Aorta (tissue), 5 donors: ENCODE measurements at regions of chr11 and their contacts with region 1.

Region 1: DNA sequence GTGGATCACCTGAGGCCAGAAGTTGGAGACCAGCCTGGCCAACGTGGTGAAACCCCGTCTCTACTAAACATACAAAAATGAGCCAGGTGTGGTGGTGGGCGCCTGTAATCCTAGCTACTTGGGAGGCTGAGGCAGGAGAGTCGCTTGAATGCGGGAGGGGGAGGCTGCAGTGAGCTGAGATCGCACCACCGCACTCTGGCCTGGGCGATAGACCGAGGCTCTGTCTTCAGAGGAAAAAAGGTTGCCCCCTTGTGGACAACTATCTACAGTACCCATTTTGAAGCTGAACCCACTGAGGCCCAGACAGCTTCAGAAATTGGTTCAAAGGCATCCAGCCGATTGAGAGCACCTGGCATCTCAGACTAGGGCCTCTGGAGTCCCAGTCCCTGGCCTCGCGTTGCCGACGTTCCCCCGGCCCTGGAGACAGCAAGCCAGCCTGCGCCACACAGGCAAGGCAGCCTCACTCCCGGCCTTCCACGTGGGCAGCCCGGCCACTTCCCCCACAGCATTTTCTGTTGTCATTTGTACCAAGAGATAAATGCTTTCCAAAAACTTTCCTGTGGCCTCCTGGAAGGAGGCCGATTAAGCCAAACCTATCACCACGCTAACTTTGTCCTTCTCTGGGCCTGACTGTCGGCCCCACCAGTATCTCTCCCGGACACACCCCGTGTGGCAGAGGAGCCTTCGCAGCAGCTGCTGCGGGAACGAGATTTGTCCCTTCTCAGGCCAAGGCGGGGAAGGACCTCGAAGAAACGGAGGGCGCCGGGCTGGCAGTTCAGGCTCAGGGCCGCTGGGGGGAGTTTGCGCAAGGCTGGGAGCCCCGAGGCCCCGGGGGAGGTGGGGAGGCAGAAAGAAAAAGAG is 82.8 kb downstream of the FLI1 start:
- DNase-seq: peak; percentile 58 to 83
- ATAC-seq: peak; percentile 55
- H3K4me3 ChIP-seq: no peak overlapping the region
- H3K27ac ChIP-seq: no peak overlapping the region
- H3K4me1 ChIP-seq: no peaks in the 10 kb centered on the region
- H3K27me3 ChIP-seq: no peaks in the 10 kb centered on the region

Region 2: DNA sequence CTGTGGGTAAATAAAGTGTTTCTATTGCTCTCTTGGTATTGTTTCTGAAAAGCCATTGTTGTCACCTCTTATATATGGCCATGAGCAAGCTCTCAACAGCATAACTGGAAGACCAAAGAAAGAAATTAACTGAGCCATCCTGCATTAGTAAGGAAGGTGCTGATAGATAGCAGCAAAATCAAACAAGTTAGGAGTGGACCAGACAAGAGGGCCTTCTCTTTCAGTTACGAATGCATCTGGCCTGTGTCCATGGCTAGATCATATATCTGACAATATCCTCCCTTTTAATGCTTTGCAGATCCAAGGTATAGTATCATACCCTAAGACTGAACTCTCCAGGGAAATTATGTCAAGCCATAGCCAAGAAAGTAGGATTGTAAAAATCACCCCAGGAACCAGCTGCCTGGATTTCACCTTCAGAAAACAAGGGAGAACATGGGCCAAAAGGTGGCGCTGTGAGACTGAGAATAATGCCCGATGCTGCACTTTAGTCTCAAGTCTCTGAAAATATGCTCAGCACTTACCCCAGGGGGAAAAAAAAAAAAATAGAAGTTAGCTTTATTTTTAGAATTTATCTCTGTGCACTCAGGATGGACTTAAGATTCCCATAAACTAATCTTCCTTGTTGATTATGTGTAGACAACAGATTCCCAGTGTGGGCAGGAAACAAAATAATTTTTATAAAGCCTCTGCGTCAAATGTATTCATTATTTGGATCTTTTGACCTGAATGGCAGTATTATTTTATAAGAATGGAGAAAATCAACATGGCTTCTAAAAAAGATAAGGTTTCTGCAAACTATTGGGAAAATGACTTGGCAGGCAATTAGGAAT is 604.4 kb before region 1 on chr11:
- intact Hi-C with region 1: loop called in 1 of 2 experiments (anchors 5 kb)
- DNase-seq: peak; percentile 84 to 91
- ATAC-seq: peak; percentile 83
- H3K4me3 ChIP-seq: no peak overlapping the region
- H3K27ac ChIP-seq: no peak overlapping the region
- H3K4me1 ChIP-seq: no peaks in the 10 kb centered on the region
- H3K27me3 ChIP-seq: peaks cover 0 to 2% of the 10 kb centered on the region in 2 donors

Region 3: DNA sequence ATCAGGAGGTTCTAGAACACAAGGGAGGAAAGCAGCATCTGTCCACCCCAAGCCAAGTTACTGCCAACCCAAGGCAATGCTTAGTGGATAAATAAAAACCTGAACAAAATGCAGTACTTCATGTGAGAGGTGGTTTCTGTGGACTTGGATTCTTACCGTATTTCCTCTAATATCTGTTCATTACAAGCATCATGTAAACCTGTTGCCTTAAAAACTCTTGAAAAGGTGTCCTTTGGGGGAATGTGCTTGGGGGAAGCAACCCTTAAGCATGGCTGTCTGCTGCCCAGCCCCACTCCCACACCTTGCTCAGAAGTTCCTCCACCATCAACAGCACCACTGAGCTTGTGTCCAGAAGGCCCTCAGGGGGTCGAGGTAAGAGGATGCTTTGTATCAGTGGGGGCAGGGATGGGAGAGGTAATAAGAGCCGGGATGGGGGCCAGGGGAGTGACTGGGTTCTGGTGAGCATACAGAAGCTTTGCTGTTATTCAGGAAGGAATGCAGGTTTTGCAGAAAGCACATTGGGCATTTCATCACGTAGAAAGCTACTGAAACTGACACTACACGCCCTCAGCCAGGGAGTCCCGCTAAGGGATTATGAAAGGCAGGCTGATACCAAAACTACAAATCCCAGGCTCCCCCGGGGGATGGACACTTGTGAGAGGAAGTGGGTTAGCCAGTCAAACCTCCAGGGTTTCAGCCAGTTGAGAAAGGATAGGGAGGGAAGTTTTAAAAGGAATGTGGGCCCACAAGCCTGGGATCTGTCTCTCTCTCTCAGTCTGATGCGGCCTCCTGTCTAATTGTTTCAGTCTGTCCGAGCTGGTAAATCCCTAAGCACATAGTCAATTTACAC is 38.4 kb after region 1 on chr11:
- intact Hi-C with region 1: loop called in 1 of 2 experiments (anchors 5 kb)
- DNase-seq: peak in 1 of 2 donors; percentile 65
- ATAC-seq: peak; percentile 62
- H3K4me3 ChIP-seq: no peak overlapping the region
- H3K27ac ChIP-seq: no peak overlapping the region
- H3K4me1 ChIP-seq: no peaks in the 10 kb centered on the region
- H3K27me3 ChIP-seq: no peaks in the 10 kb centered on the region

Region 4: DNA sequence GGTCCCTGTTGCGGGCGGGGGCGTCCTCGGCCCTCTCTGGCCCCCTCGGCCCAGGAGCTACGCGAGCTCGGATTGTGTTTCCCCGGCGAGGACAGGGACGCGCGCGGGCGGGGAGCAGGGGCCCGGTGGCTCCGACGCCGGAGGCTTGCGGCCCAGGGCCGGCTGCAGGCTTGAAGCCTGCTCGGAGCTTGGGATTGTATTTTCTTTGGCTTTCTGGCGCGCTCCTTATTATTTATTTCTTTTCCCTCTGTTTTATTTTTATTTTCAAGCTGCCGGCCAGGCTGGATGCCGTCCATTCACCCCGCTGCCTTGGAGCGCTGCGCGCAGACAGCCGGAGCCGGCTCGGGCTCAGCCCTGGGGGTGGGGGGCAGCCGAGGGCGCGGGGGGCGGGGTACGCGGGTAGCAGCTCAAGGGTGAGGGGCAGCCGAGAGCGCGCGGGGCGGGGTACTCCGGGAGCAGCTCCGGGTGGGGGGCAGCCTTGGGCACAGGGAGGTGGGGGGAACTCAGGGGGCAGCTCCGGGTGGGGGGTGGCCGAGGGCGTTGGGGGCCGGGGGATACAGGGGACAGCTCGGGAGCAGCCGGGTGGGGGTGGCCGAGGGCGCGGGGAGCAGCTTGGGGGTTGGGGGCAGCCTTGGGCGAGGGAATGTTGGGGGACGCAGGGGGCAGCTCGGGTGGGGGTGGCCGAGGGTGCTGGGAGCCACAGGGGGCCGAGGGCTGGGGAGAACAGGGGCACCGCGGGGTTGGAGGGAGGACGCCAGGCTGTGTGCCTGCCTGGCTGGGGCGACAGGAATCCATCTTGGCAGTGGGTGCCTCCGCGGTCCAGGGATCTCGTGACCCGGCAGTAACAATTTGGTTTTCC is 47.8 kb after region 1 on chr11:
- intact Hi-C with region 1: loop called (anchors 5 kb)
- DNase-seq: peak in 1 of 2 donors; percentile 49
- ATAC-seq: peak; percentile 75
- H3K4me3 ChIP-seq: no peak overlapping the region
- H3K27ac ChIP-seq: no peak overlapping the region
- H3K4me1 ChIP-seq: no peaks in the 10 kb centered on the region
- H3K27me3 ChIP-seq: no peaks in the 10 kb centered on the region